Psoas muscle (tissue), 8 donors: ENCODE measurements at regions of chr2 and their contacts with region 1.

Region 1: GRCh38 chr2:151819920-151820319 is 8.3 kb downstream of the ARL5A start:
- DNase-seq: no peak
- ATAC-seq: no peak
- H3K4me3 ChIP-seq: no peak overlapping the region
- H3K27ac ChIP-seq: no peak overlapping the region
- H3K4me1 ChIP-seq: peaks cover 53% of the 10 kb centered on the region
- H3K27me3 ChIP-seq: no peaks in the 10 kb centered on the region
- CTCF ChIP-seq: no peak

Region 2: DNA sequence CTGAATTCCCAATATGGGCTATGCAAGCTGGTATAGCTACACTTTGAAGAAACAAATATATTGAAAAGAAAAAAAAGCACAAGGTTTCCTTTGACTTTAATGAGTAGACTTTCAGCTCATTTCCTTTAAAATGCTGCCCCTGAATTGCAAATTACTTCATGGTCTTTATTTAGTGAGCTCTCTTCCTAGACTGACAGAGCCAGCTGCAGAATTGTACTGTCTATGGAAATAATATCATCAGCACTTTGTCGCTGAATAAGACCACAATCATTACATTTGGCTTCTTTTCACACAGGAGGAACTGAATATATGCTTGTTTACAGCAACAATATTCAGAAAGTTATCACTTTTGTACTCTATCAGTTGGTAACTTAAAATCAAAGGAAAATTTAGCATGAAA is 33.4 kb before region 1 on chr2:
- intact Hi-C with region 1: loop called in 1 of 2 experiments (anchors 5 kb)
- DNase-seq: no peak
- ATAC-seq: peak; percentile 76 to 89 (median 82)
- H3K4me3 ChIP-seq: peak overlapping the region; percentile 52
- H3K27ac ChIP-seq: peak overlapping the region; percentile 90
- H3K4me1 ChIP-seq: peaks cover 22% of the 10 kb centered on the region
- H3K27me3 ChIP-seq: no peaks in the 10 kb centered on the region
- CTCF ChIP-seq: no peak